ENCODE measurements at regions of chr6 and their contacts with region 1.

Region 1: DNA sequence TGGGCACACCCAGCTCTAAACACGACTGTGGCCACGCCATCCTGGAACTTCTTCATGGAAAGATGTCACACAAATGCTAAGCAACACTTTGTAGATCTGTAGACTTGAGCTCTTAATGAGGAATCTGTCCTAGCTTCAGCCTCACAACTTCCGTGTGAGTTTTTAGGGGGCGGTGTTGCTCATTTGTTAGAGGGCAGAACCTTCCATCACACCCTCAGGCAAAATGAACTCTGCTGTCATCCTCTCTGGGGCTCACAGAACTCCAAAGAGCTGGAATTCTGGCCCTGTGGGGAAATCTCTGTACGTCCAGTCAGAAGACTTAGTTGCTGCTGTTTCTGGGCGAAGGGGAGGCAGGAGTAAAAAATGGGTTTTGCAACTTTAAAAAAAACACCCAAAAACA is 49.8 kb downstream of the NRN1 start:
- DNase-seq: no peak
- H3K4me3 ChIP-seq: no peak overlapping the region
- H3K27ac ChIP-seq: no peak overlapping the region
- H3K4me1 ChIP-seq: no peaks in the 10 kb centered on the region
- H3K27me3 ChIP-seq: no peaks in the 10 kb centered on the region
- CTCF ChIP-seq: no peak
- POLR2A ChIP-seq: no peak

Region 2: DNA sequence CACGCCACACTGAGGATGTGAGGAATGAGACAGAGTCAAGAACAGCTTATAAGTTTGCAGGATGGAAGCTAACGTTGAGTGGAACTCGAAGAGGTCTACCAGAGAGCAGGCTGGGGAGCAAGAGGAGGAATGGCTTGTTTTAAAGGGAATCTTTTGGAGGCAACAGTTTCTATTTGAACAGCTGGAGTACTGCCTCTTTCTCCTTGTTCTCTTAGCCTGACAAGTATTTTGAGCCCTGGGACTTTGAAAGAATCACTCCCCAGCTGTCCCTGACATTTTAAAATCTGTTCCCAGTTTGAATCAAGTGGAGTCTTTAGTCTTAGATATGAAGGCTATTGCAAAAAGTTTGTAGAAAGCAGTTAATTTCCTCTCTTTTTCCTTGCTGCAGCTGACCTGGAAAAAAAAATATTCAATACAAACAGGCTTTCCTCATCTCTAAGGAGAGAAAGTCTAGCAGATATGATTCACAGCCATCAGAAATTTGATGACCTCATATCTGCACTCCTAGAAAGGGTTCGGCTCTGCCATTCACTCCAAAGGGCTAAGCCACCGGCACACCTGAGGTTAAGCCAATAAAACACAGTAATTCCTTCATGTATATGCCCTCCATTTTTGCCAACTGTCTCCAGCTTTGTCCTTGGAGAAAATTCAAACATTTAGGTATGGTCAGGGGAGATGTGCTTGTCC is 612.7 kb after region 1 on chr6:
- intact Hi-C with region 1: loop called (anchors 5 kb)
- DNase-seq: no peak
- H3K4me3 ChIP-seq: no peak overlapping the region
- H3K27ac ChIP-seq: no peak overlapping the region
- H3K4me1 ChIP-seq: no peaks in the 10 kb centered on the region
- H3K27me3 ChIP-seq: no peaks in the 10 kb centered on the region
- CTCF ChIP-seq: no peak
- POLR2A ChIP-seq: no peak

Measured in breast epithelium (tissue), 4 donors.